Calu3 (cell line): ENCODE measurements at regions of chr7 and their contacts with region 1.

Region 1: GRCh38 chr7:120987683-120988590 is 574 bp upstream of the CPED1 start:
- DNase-seq: peak; percentile 89
- H3K4me3 Mint-ChIP-seq: peak overlapping the region; percentile 84
- H3K27ac Mint-ChIP-seq: no peak overlapping the region
- H3K4me1 Mint-ChIP-seq: peaks cover 22% of the 10 kb centered on the region
- H3K27me3 Mint-ChIP-seq: no peaks in the 10 kb centered on the region
- CTCF ChIP-seq: peak; percentile 88

Region 2: GRCh38 chr7:120894254-120894653 is 93.7 kb before region 1 on chr7:
- CTCF ChIA-PET with region 1: no interaction called
- intact Hi-C with region 1: no loop called
- DNase-seq: no peak
- H3K4me3 Mint-ChIP-seq: no peak overlapping the region
- H3K27ac Mint-ChIP-seq: no peak overlapping the region
- H3K4me1 Mint-ChIP-seq: no peaks in the 10 kb centered on the region
- H3K27me3 Mint-ChIP-seq: peaks cover 17% of the 10 kb centered on the region
- CTCF ChIP-seq: no peak

Region 3: DNA sequence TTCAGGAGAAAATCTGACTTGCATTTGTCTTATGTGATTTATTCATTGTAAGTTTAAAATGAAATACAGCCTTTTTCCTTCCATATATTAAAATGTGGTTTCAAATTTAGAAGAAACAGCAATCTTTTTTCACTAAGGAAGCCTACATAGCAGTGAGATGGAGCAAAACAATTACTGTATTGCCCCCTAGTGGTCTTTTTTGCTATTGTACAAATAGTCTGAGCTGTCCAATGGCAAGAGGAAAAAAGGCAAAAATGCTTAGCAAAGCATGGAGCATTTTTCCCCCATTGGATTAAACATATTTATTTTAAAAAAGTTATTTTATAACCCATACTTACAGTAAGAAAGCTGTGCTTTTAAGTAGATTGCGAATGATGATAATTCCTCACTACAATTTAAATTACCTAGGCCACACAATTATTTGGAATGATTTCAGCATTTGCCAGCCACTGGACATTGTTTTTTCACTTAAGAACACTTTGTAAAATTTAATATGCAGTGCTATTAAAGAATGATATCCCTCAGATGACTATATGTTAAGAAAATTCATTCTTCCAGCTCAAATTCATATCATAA is 120.1 kb after region 1 on chr7:
- CTCF ChIA-PET with region 1: interaction called, 27 read pairs
- intact Hi-C with region 1: loop called (anchors 1 kb)
- DNase-seq: peak; percentile 24
- H3K4me3 Mint-ChIP-seq: no peak overlapping the region
- H3K27ac Mint-ChIP-seq: no peak overlapping the region
- H3K4me1 Mint-ChIP-seq: peaks cover 10% of the 10 kb centered on the region
- H3K27me3 Mint-ChIP-seq: no peaks in the 10 kb centered on the region
- CTCF ChIP-seq: peak; percentile 59

Region 4: GRCh38 chr7:121329191-121330052 is 341.5 kb after region 1 on chr7:
- CTCF ChIA-PET with region 1: no interaction called
- intact Hi-C with region 1: loop called (anchors 10 kb)
- DNase-seq: peak; percentile 71
- H3K4me3 Mint-ChIP-seq: peak overlapping the region; percentile 76
- H3K27ac Mint-ChIP-seq: no peak overlapping the region
- H3K4me1 Mint-ChIP-seq: peaks cover 9% of the 10 kb centered on the region
- H3K27me3 Mint-ChIP-seq: peaks cover 26% of the 10 kb centered on the region
- CTCF ChIP-seq: peak; percentile 19